ENCODE measurements at regions of chr7 and their contacts with region 1.

Region 1: GRCh38 chr7:55641273-55641691 is 69.0 kb upstream of the VOPP1 start:
- DNase-seq: peak; percentile 47
- H3K4me3 ChIP-seq: no peak overlapping the region
- H3K27ac ChIP-seq: no peak overlapping the region
- H3K4me1 ChIP-seq: no peaks in the 10 kb centered on the region
- H3K27me3 ChIP-seq: no peaks in the 10 kb centered on the region
- CTCF ChIP-seq: peak; percentile 71

Region 2: DNA sequence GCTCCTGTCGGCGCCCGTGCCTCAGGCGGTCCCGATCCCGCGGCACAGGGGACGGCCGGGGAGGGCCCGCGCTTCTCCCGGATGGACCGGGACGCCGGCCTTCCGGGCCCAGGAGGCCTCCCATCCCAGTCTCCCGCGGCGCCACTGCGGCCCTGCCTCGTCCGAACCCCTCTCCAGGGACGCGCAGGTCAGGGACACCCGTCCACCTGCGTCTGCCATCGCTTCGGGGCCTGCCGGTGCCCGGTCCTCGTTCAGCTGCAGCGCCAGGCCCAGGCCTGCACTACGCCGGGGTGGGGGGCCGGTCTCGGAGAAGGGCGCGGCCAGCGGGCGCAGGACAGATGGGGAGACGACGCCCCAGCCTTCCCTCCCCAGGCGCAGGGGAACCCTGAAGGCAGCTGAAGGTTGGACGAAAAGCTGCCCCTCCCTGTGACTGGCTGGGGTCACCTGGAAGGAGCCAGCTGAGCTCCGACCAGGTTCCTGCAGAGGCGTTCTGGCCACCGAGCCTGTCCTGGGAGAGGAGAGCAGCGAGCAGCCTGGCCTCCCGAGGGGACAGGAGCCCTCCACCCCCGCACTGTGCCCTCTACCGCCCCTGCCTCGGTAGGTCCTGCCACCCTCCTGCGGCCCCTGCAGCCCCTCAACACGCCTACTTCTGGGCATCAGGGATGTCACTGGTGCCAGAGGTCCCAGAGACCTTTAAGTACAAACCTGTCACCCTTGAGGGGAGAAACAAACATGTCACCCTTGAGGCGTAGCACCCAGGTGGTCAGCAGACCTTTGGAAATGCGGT is 191.9 kb before region 1 on chr7:
- intact Hi-C with region 1: no loop called
- DNase-seq: no peak
- H3K4me3 ChIP-seq: no peak overlapping the region
- H3K27ac ChIP-seq: no peak overlapping the region
- H3K4me1 ChIP-seq: no peaks in the 10 kb centered on the region
- H3K27me3 ChIP-seq: no peaks in the 10 kb centered on the region
- CTCF ChIP-seq: no peak

Region 3: DNA sequence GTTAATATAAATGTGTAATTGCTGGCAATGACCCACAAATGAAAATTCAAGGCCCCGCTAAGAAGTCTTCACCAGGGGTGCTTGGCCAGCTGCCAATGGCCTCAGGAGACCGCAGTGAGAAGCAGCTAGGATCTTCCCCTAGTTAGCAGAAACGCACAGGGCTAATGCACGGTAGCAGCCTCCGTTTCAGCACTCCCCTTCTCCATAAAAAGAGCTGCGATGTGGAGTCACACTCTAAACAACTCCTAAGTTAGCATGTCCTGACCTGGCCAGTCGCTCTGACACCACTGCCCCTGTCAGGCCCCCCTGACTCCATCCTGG is 82.3 kb after region 1 on chr7:
- intact Hi-C with region 1: loop called (anchors 5 kb)
- DNase-seq: no peak
- H3K4me3 ChIP-seq: no peak overlapping the region
- H3K27ac ChIP-seq: no peak overlapping the region
- H3K4me1 ChIP-seq: no peaks in the 10 kb centered on the region
- H3K27me3 ChIP-seq: no peaks in the 10 kb centered on the region
- CTCF ChIP-seq: no peak

Region 4: DNA sequence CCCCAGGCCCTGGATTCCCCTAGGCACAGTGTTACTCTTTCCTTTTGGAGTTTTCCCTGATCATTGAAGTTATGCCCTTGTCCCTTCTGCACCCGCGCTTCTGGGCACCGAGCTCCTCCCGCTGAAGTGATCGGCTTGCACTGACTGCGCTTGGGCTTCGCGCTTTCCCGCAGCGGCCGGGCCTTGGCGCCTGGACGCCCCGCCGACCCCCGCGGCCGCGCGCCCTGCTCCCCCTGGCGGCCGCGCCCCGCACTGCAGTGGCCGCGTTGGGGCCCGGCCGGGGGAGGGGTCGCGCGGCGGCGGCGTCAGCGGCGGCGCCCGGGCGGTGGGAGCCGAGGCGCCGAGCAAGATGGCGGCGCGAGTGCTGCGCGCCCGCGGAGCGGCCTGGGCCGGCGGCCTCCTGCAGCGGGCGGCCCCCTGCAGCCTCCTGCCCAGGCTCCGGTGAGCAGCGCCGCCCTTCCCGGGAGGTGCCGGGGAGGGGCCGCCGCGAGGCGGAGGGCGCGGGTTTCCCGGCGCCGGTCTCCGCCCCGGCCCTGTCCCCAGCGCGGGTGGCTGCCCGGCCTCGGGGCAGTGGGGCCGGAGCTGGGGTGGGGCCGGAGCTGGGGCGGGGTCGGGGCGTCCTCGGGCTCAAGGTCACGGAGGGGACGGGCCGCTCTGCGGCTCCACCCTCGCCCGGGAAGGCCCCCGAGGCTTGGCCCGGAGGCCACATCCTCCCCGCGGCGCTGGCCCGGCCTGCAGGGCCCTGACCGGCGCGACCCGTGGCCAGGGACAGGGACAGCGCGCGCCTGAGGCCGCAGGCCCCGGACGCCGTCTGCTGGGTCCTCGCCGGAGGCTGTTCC is 323.2 kb after region 1 on chr7 and contains the start of gene NIPSNAP2:
- intact Hi-C with region 1: loop called (anchors 10 kb)
- DNase-seq: peak; percentile 86
- H3K4me3 ChIP-seq: peak within 1 kb of the TSS; percentile 66
- H3K27ac ChIP-seq: peak within 1 kb of the TSS; percentile 94
- H3K4me1 ChIP-seq: peaks cover 5% of the 10 kb centered on the region
- H3K27me3 ChIP-seq: no peaks in the 10 kb centered on the region
- CTCF ChIP-seq: no peak
- total RNA-seq, gene NIPSNAP2: 32.2 to 67.5 TPM

Region 5: GRCh38 chr7:56074371-56074791 is 433.1 kb after region 1 on chr7:
- intact Hi-C with region 1: loop called (anchors 2 kb)
- DNase-seq: peak; percentile 87
- H3K4me3 ChIP-seq: no peak overlapping the region
- H3K27ac ChIP-seq: no peak overlapping the region
- H3K4me1 ChIP-seq: no peaks in the 10 kb centered on the region
- H3K27me3 ChIP-seq: no peaks in the 10 kb centered on the region
- CTCF ChIP-seq: peak; percentile 92